MCF 10A (cell line): ENCODE measurements at regions of chr2 and their contacts with region 1.

Region 1: GRCh38 chr2:223601932-223602666 is at the start of gene SCG2:
- DNase-seq: peak; percentile 78
- H3K4me3 Mint-ChIP-seq: no peak within 1 kb of the TSS
- H3K27ac Mint-ChIP-seq: no peak within 1 kb of the TSS
- H3K4me1 Mint-ChIP-seq: peaks cover 17% of the 10 kb centered on the region
- H3K27me3 Mint-ChIP-seq: no peaks in the 10 kb centered on the region
- CTCF ChIP-seq: peak; percentile 26
- total RNA-seq, gene SCG2: 0.52 and 0.84 TPM in 2 replicates

Region 2: GRCh38 chr2:222769446-222769845 is 832.7 kb before region 1 on chr2:
- CTCF ChIA-PET with region 1: no interaction called
- POLR2A ChIA-PET with region 1: no interaction called
- intact Hi-C with region 1: no loop called
- DNase-seq: no peak
- H3K4me3 Mint-ChIP-seq: no peak overlapping the region
- H3K27ac Mint-ChIP-seq: no peak overlapping the region
- H3K4me1 Mint-ChIP-seq: no peaks in the 10 kb centered on the region
- H3K27me3 Mint-ChIP-seq: no peaks in the 10 kb centered on the region
- CTCF ChIP-seq: no peak

Region 3: DNA sequence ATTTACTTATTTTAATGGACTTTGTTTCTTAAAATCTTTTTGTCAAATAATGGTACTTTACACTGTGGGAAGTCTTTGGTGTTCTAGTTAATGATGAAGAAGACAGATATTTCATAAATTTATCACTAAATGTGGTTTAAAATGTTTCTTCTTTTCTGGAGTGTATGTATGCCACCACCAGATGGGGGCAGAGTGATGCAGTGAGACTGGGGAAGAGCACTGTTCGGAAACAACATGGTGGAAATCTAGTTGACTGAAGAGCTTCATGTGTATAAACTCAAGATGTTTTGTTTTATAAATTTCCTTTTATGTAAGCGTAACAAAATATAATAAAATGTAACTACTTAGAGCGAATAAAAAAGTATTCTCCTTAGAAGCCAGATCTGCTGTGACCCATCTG is 355.0 kb before region 1 on chr2:
- CTCF ChIA-PET with region 1: interaction called, 5 read pairs
- POLR2A ChIA-PET with region 1: no interaction called
- intact Hi-C with region 1: loop called (anchors 2 kb)
- DNase-seq: peak; percentile 34
- H3K4me3 Mint-ChIP-seq: no peak overlapping the region
- H3K27ac Mint-ChIP-seq: no peak overlapping the region
- H3K4me1 Mint-ChIP-seq: no peaks in the 10 kb centered on the region
- H3K27me3 Mint-ChIP-seq: no peaks in the 10 kb centered on the region
- CTCF ChIP-seq: peak; percentile 43

Region 4: DNA sequence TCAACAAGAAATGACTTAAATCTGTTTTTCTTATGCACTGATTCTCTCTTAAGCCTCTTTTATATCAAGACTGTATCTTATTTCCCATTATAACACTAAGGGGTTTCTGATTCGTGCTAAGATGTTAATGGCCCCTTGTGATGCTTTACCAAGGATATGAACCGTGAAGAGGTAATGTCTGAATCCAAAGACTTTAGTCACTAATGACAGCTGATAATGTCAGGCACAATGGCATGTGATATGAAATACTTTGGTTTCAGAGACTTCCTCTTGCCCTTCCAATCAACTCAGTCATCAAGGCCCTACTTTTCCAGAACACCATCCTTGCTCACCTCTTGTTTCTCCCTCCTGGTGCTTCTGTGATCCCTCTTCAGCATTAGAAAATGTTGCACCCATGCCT is 287.3 kb before region 1 on chr2:
- CTCF ChIA-PET with region 1: no interaction called
- POLR2A ChIA-PET with region 1: no interaction called
- intact Hi-C with region 1: loop called (anchors 10 kb)
- DNase-seq: no peak
- H3K4me3 Mint-ChIP-seq: no peak overlapping the region
- H3K27ac Mint-ChIP-seq: no peak overlapping the region
- H3K4me1 Mint-ChIP-seq: peaks cover 10% of the 10 kb centered on the region
- H3K27me3 Mint-ChIP-seq: no peaks in the 10 kb centered on the region
- CTCF ChIP-seq: no peak

Region 5: DNA sequence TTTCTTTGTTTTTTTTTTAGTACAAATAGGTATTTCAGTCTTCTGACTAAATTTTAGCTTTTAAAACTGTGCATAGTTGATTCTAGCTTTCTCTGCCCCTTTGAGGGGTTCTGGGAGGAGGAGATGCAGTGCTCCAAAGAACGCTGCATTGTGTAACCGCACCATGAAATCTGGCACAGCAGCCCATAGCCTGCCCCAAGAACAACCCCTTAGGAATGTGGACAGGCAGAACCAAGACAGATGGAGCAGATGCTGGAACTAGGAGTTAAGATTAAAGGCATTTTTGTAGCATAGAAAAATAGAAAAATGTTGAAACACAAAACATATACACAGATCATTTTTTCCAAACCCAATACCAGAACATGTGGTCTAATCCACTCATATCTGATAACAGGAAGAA is 187.5 kb before region 1 on chr2:
- CTCF ChIA-PET with region 1: no interaction called
- POLR2A ChIA-PET with region 1: no interaction called
- intact Hi-C with region 1: no loop called
- DNase-seq: no peak
- H3K4me3 Mint-ChIP-seq: no peak overlapping the region
- H3K27ac Mint-ChIP-seq: no peak overlapping the region
- H3K4me1 Mint-ChIP-seq: peaks cover 4% of the 10 kb centered on the region
- H3K27me3 Mint-ChIP-seq: no peaks in the 10 kb centered on the region
- CTCF ChIP-seq: no peak

Region 6: GRCh38 chr2:223563462-223563861 is 38.6 kb before region 1 on chr2:
- CTCF ChIA-PET with region 1: interaction called, 4 read pairs
- POLR2A ChIA-PET with region 1: no interaction called
- intact Hi-C with region 1: loop called (anchors 5 kb)
- DNase-seq: peak; percentile 92
- H3K4me3 Mint-ChIP-seq: no peak overlapping the region
- H3K27ac Mint-ChIP-seq: peak overlapping the region; percentile 33
- H3K4me1 Mint-ChIP-seq: peaks cover 19% of the 10 kb centered on the region
- H3K27me3 Mint-ChIP-seq: no peaks in the 10 kb centered on the region
- CTCF ChIP-seq: no peak